ENCODE measurements at regions of chr3 and their contacts with region 1.

Region 1: GRCh38 chr3:184362668-184363540 is 1.4 kb downstream of the POLR2H start:
- DNase-seq: peak; percentile 97
- H3K4me3 Mint-ChIP-seq: peak overlapping the region; percentile 97
- H3K27ac Mint-ChIP-seq: peak overlapping the region; percentile 94
- H3K4me1 Mint-ChIP-seq: peaks cover 30% of the 10 kb centered on the region
- H3K27me3 Mint-ChIP-seq: no peaks in the 10 kb centered on the region

Region 2: GRCh38 chr3:184017672-184018423 is 345.1 kb before region 1 on chr3 and contains the start of gene ABCC5:
- CTCF ChIA-PET with region 1: no interaction called
- intact Hi-C with region 1: loop called (anchors 2 kb)
- DNase-seq: peak; percentile 88
- H3K4me3 Mint-ChIP-seq: peak within 1 kb of the TSS; percentile 98
- H3K27ac Mint-ChIP-seq: peak within 1 kb of the TSS; percentile 77
- H3K4me1 Mint-ChIP-seq: peaks cover 16% of the 10 kb centered on the region
- H3K27me3 Mint-ChIP-seq: no peaks in the 10 kb centered on the region
- total RNA-seq, gene ABCC5: 11.2 to 12.0 TPM

Region 3: GRCh38 chr3:184185461-184186308 is 177.2 kb before region 1 on chr3 and contains the start of gene ABCF3:
- CTCF ChIA-PET with region 1: no interaction called
- intact Hi-C with region 1: loop called (anchors 2 kb)
- DNase-seq: peak; percentile 99
- H3K4me3 Mint-ChIP-seq: peak within 1 kb of the TSS; percentile 94
- H3K27ac Mint-ChIP-seq: peak within 1 kb of the TSS; percentile 92
- H3K4me1 Mint-ChIP-seq: peaks cover 28% of the 10 kb centered on the region
- H3K27me3 Mint-ChIP-seq: no peaks in the 10 kb centered on the region
- total RNA-seq, gene ABCF3: 38.5 to 39.1 TPM

Region 4: DNA sequence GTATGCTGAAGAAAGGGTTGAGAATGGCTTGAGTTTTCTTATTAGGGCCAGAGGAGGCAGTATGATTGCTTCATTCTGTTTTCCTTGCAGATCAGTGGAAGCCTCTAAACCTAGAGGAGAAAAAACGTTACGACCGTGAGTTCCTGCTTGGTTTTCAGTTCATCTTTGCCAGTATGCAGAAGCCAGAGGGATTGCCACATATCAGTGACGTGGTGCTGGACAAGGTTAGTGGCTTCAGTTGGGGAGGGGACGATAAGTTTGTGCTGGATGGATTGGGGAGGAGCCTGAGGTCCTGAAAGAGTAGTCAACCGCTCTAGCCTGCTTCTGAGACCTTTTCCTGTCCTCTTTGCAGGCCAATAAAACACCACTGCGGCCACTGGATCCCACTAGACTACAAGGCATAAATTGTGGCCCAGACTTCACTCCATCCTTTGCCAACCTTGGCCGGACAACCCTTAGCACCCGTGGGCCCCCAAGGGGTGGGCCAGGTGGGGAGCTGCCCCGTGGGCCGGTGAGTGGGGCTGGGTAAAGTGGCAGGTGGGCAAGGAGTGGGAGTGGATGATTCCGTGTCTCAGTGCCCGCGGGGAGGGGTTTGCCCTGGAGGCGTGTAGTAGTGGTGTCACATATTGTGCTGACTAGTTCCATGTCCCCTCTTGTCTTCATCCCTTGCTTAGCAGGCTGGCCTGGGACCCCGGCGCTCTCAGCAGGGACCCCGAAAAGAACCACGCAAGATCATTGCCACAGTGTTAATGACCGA is 40.0 kb before region 1 on chr3:
- CTCF ChIA-PET with region 1: no interaction called
- intact Hi-C with region 1: no loop called
- DNase-seq: no peak
- H3K4me3 Mint-ChIP-seq: no peak overlapping the region
- H3K27ac Mint-ChIP-seq: peak overlapping the region; percentile 36
- H3K4me1 Mint-ChIP-seq: peaks cover 43% of the 10 kb centered on the region
- H3K27me3 Mint-ChIP-seq: no peaks in the 10 kb centered on the region

Region 5: GRCh38 chr3:184335661-184336546 is 27.0 kb before region 1 on chr3:
- CTCF ChIA-PET with region 1: no interaction called
- intact Hi-C with region 1: loop called (anchors 1 kb)
- DNase-seq: peak; percentile 85
- H3K4me3 Mint-ChIP-seq: peak overlapping the region; percentile 80
- H3K27ac Mint-ChIP-seq: peak overlapping the region; percentile 87
- H3K4me1 Mint-ChIP-seq: peaks cover 62% of the 10 kb centered on the region
- H3K27me3 Mint-ChIP-seq: no peaks in the 10 kb centered on the region

Region 6: GRCh38 chr3:184428561-184429175 is 65.8 kb after region 1 on chr3:
- CTCF ChIA-PET with region 1: no interaction called
- intact Hi-C with region 1: no loop called
- DNase-seq: no peak
- H3K4me3 Mint-ChIP-seq: no peak overlapping the region
- H3K27ac Mint-ChIP-seq: no peak overlapping the region
- H3K4me1 Mint-ChIP-seq: no peaks in the 10 kb centered on the region
- H3K27me3 Mint-ChIP-seq: no peaks in the 10 kb centered on the region

Region 7: DNA sequence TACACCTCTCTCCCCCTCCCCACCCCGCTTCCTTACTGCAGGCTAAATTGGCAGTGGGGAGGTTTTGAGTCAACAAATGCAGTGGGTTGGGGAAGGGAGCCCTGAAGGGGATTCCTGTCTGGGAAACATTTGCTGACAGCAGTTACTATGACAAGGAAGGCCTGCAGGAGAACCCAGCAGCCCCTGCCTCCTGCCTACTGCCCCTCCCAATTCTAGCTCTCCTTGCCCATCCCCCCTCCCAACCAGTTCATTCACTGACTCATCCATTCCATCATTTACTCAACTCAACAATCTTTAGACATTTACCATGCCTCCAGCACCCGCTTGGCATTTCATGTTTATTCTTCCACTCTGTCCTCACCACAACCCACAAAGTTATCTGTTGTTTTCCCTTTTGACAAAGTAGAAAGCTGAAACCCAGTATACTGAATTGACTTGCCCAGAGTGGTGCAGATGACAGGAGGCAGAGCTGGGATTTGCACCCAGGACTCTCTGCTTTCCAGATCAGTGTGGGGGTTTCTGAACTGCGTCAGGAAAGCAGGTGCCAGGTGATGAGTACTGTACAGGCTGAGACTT is 273.9 kb after region 1 on chr3:
- CTCF ChIA-PET with region 1: no interaction called
- intact Hi-C with region 1: loop called (anchors 1 kb)
- DNase-seq: peak; percentile 74
- H3K4me3 Mint-ChIP-seq: no peak overlapping the region
- H3K27ac Mint-ChIP-seq: no peak overlapping the region
- H3K4me1 Mint-ChIP-seq: no peaks in the 10 kb centered on the region
- H3K27me3 Mint-ChIP-seq: no peaks in the 10 kb centered on the region

Region 8: GRCh38 chr3:184811999-184812661 is 449.2 kb after region 1 on chr3 and contains the start of gene VPS8:
- CTCF ChIA-PET with region 1: interaction called, 3 read pairs
- intact Hi-C with region 1: loop called (anchors 1 kb)
- DNase-seq: peak; percentile 97
- H3K4me3 Mint-ChIP-seq: peak within 1 kb of the TSS; percentile 92
- H3K27ac Mint-ChIP-seq: peak within 1 kb of the TSS; percentile 85
- H3K4me1 Mint-ChIP-seq: peaks cover 48% of the 10 kb centered on the region
- H3K27me3 Mint-ChIP-seq: no peaks in the 10 kb centered on the region
- total RNA-seq, gene VPS8: 32.7 to 33.7 TPM

Measured in activated naive CD4-positive, alpha-beta T cell treated with anti-CD3 and anti-CD28 coated beads for 36 hours (primary cell).